Activated CD8-positive, alpha-beta memory T cell treated with anti-CD3 and anti-CD28 coated beads, Interleukin-2, amount 10 ng/mL, durations not matched to agents 7 days and 5 days (primary cell): ENCODE measurements at regions of chr2 and their contacts with region 1.

Region 1: GRCh38 chr2:64609227-64609941 is 44.3 kb downstream of the SERTAD2 start:
- DNase-seq: peak; percentile 75
- ATAC-seq: peak; percentile 75
- H3K4me3 Mint-ChIP-seq: peak overlapping the region; percentile 64
- H3K27ac Mint-ChIP-seq: no peak overlapping the region
- H3K4me1 Mint-ChIP-seq: peaks cover 26% of the 10 kb centered on the region
- H3K27me3 Mint-ChIP-seq: peaks cover 14% of the 10 kb centered on the region

Region 2: GRCh38 chr2:64586883-64587481 is 22.4 kb before region 1 on chr2:
- CTCF ChIA-PET with region 1: interaction called, 13 read pairs
- DNase-seq: no peak
- ATAC-seq: peak; percentile 65
- H3K4me3 Mint-ChIP-seq: no peak overlapping the region
- H3K27ac Mint-ChIP-seq: no peak overlapping the region
- H3K4me1 Mint-ChIP-seq: peaks cover 6% of the 10 kb centered on the region
- H3K27me3 Mint-ChIP-seq: no peaks in the 10 kb centered on the region

Region 3: GRCh38 chr2:64865073-64865830 is 255.9 kb after region 1 on chr2:
- CTCF ChIA-PET with region 1: interaction called, 13 read pairs
- DNase-seq: peak; percentile 69
- ATAC-seq: peak; percentile 95
- H3K4me3 Mint-ChIP-seq: peak overlapping the region; percentile 66
- H3K27ac Mint-ChIP-seq: no peak overlapping the region
- H3K4me1 Mint-ChIP-seq: no peaks in the 10 kb centered on the region
- H3K27me3 Mint-ChIP-seq: peaks cover 9% of the 10 kb centered on the region